PC-9 (cell line): ENCODE measurements at regions of chr11 and their contacts with region 1.

Region 1: DNA sequence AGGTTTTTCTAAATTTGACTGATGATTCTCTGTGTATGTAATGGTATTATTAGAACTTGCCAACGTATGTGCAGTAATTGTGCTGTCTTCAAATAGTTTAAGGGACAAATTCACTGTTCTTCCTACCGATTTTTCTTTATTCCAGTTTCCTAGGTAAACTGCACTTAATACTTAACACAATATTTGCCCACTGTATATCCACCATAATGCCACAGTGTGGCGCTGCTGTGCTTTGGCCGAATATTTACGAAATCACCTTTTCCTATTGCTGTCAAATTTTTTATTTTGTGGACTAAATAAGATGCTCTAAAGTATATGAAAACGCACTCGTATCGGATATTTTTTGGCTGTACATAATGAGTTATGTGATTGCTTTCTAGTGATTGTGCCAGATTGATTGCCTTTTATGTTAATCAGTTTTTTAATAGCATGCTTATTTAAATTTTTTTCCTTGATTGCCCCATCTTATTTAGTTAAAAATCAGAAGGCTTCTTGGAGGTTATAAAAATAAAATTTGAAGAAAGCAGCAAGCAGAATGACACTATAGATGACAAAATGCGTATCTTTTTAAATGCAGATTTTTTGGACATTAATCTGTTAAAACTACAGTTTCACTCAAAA is 10.5 kb downstream of the AASDHPPT start:
- DNase-seq: peak; percentile 21 to 54
- H3K4me3 ChIP-seq: no peak overlapping the region
- H3K27ac ChIP-seq: no peak overlapping the region
- H3K4me1 ChIP-seq: peaks cover 4% of the 10 kb centered on the region; the same call in 1 of the 2 replicates
- H3K27me3 ChIP-seq: no peaks in the 10 kb centered on the region
- CTCF ChIP-seq: peak; percentile 98

Region 2: DNA sequence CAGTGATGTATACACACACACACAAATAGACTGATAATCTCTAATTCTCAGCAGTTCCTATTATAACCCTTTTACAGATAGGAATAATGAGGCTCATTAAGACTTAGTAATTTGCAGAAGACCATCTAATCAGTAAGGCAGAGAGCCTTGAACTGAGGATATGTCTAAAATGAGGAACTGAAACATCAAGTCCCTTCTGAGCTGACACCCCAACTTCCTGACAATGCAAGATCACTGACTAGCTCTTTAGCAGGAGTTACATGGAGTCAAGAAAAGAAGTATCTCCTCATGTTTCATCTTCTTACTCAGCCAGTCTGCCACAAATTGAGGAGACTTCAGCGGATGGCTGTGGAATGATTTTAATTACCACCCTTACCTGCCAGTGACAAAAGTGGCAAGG is 258.8 kb before region 1 on chr11:
- CTCF ChIA-PET with region 1: no interaction called
- POLR2A ChIA-PET with region 1: no interaction called
- intact Hi-C with region 1: no loop called
- DNase-seq: no peak
- H3K4me3 ChIP-seq: no peak overlapping the region
- H3K27ac ChIP-seq: no peak overlapping the region
- H3K4me1 ChIP-seq: no peaks in the 10 kb centered on the region
- H3K27me3 ChIP-seq: no peaks in the 10 kb centered on the region
- CTCF ChIP-seq: no peak

Region 3: GRCh38 chr11:106105986-106106385 is 18.1 kb after region 1 on chr11:
- CTCF ChIA-PET with region 1: no interaction called
- POLR2A ChIA-PET with region 1: no interaction called
- intact Hi-C with region 1: no loop called
- DNase-seq: no peak
- H3K4me3 ChIP-seq: no peak overlapping the region
- H3K27ac ChIP-seq: no peak overlapping the region
- H3K4me1 ChIP-seq: no peaks in the 10 kb centered on the region
- H3K27me3 ChIP-seq: no peaks in the 10 kb centered on the region
- CTCF ChIP-seq: no peak

Region 4: DNA sequence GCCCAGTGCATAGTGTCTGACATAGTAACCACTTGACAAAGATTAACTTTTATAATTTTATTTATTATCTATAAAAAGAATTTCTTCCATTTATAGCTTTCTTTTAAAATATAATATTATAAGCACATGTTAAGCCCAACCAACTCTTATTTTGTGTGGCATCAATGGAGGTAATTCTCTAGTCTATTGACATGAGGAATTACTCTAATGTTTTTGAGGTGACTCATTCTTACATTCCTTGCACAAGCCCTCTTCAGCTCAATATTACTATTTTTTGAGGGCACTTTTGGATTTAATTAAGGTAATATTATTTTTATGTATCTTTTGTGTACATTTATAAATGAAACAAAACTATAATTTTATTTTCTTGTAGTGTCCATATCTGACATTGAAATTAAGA is 49.1 kb after region 1 on chr11:
- CTCF ChIA-PET with region 1: no interaction called
- POLR2A ChIA-PET with region 1: no interaction called
- intact Hi-C with region 1: no loop called
- DNase-seq: peak in 1 of 2 experiments; percentile 43
- H3K4me3 ChIP-seq: no peak overlapping the region
- H3K27ac ChIP-seq: no peak overlapping the region
- H3K4me1 ChIP-seq: no peaks in the 10 kb centered on the region
- H3K27me3 ChIP-seq: no peaks in the 10 kb centered on the region
- CTCF ChIP-seq: no peak

Region 5: DNA sequence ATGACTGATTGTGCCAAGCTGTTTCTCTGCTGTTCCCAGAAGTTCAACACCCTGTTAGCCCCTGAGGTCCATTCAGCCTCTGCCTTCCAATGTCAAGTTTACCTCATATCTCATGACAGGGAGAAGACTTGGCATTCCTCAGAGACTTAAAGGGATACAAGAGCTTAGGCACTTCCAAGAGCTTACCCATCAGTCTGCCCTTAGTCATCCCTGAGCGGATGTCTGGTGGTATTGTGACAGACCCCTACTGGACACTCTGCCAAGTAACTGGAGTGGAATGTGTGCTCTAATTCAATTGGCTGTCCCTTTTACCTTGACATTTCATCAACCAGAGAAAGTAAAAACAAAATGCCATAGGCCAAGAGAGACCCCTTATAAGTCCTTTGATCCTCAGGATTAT is 141.1 kb after region 1 on chr11:
- CTCF ChIA-PET with region 1: no interaction called
- POLR2A ChIA-PET with region 1: no interaction called
- intact Hi-C with region 1: no loop called
- DNase-seq: no peak
- H3K4me3 ChIP-seq: no peak overlapping the region
- H3K27ac ChIP-seq: no peak overlapping the region
- H3K4me1 ChIP-seq: no peaks in the 10 kb centered on the region
- H3K27me3 ChIP-seq: no peaks in the 10 kb centered on the region
- CTCF ChIP-seq: no peak

Region 6: DNA sequence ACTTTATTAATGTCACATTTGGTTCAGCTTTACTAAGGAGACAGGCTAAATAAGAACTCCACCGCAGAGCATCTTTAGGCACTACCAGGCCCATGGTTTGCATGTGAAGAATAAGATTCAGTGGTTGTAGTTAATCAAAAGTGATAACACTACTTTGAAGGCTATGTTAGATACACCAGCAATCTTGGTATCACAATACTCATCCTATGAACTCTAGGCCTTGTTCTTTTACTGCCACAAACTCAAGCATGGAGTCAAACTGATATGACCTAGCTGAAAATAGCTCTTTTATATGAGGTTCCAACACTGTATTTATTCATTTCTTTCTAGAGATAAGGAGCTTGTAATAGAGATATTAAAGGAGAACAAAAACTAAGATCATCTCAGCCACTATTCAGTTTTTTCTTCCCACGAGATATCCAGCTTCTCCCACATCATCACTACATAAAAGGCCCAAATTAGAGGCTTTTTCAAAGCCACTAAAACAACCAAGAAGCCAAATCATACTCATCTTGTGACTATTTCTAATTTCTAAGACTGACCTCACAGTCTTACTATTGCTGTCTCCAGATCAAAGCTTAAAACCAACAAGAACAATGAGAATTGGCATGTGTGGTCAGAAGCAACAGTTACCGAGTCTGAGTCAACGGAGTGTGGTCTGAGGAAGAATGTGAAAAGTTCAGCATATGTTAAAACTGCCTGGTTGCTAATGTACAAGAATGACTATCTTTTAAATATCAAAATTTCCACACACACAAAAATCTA is 955.5 kb after region 1 on chr11:
- CTCF ChIA-PET with region 1: no interaction called
- POLR2A ChIA-PET with region 1: no interaction called
- intact Hi-C with region 1: loop called (anchors 5 kb)
- DNase-seq: peak in 1 of 2 experiments; percentile 58
- H3K4me3 ChIP-seq: no peak overlapping the region
- H3K27ac ChIP-seq: no peak overlapping the region
- H3K4me1 ChIP-seq: 0 out of 2 replicates have a peak, but pooled peaks cover 4% of the 10 kb centered on the region
- H3K27me3 ChIP-seq: no peaks in the 10 kb centered on the region
- CTCF ChIP-seq: no peak